Sciatic nerve (tissue), 2 donors: ENCODE measurements at regions of chr12 and their contacts with region 1.

Region 1: DNA sequence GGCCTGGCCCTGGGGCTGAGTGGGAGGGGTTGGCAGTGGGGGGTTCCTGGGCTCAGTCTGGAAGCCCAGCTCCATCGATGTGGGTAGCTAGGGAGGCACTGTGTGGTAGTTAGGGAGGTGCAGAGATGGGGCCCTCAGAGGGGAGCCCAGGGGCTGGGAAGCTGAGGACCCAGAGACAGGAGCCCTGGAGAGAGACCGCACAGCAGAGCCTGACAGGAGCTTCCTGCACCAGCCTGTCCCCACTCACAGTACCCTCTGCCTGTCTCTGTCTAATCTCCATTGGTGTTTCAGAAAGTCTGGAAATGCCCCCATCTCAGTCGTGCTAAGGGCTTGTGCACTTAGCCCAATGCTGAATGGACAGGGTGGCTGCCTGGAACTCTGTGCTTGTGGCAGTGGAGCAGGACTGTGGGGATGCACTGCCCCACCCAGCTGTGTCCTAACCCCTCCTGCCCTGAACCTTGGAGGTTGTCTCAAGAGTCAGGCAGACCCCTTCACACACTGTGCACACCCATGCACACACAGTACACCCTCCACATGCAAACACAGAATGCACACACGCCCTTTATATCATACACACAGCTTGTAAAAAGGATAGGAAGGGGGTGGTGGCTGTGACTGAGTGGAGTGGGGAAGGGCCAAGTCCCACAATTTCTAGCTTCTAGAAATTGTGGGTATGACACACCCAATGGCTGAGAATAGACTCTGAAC is 8.8 kb downstream of the KRT8 start:
- DNase-seq: no peak
- ATAC-seq: no peak

Region 2: GRCh38 chr12:52796839-52797528 is 99.1 kb before region 1 on chr12:
- intact Hi-C with region 1: loop called (anchors 2 kb)
- DNase-seq: no peak
- ATAC-seq: no peak